ENCODE measurements at regions of chr17 and their contacts with region 1.

Region 1: DNA sequence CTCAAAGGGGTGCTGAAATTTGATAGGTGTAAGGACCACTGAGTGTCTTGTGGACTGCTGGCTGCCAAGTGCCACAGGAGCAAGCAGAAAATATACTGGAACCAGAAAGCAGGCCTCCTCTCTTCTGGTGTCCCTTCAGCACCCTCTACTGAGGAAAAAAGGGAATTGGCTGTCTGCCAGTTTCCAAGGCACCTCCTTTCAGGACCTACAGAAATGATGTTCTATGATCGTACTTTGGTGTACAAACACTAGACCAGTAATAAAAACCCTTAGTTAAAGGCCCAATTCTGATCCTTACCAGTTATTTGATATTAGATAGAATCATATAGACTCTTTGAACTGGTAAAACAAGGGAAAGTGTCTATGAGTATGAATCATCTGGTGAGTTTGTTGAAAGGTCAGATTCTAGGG is 35.8 kb upstream of the BCAS3 start:
- DNase-seq: peak; percentile 93
- ATAC-seq: peak; percentile 80
- H3K4me3 ChIP-seq: no peak overlapping the region
- H3K27ac ChIP-seq: peak overlapping the region; percentile 25
- H3K4me1 ChIP-seq: peaks cover 13% of the 10 kb centered on the region
- H3K27me3 ChIP-seq: no peaks in the 10 kb centered on the region
- CTCF ChIP-seq: peak; percentile 81

Region 2: DNA sequence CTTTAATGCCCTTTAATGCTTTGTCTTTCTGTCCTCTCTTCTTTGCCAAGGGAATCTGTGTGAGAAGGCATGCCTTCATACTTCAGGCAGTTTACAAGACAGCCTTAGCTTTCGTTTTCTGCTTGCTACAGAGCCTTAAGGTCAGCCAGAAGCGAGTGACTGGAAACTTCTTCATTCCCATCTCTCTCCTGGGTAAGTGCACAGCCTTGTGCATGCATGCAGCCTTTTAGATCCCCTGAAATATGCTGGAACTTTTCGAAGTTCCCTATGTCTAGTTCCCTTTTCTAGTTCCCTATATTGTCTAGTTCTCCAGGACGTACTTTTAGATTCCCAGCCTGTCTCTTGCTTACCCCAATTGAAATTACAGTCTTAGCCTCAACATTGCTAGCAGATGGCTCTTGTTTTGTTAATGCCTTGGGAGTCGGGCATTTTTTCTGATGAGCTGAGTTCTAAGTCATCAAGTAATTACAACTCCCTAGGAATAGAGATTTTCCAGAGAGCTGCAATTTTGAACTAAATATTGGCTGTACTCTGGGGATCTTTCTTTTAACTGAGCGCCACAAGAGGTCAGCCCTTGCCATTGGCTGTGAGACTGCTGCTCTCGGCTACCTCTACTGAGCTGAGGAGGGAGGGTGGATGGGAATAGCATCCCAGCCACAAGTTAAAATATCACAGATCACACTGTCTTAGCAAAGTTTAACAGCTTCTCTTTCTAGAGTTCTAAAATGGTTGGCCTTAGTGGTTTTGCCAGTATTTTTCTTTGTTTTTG is 64.5 kb before region 1 on chr17:
- CTCF ChIA-PET with region 1: interaction called, 24 read pairs
- POLR2A ChIA-PET with region 1: interaction called, 13 read pairs
- intact Hi-C with region 1: loop called (anchors 1 kb)
- DNase-seq: peak; percentile 52
- ATAC-seq: peak; percentile 99
- H3K4me3 ChIP-seq: peak overlapping the region; percentile 66
- H3K27ac ChIP-seq: no peak overlapping the region
- H3K4me1 ChIP-seq: 0 out of 2 replicates have a peak, but pooled peaks cover 3% of the 10 kb centered on the region
- H3K27me3 ChIP-seq: no peaks in the 10 kb centered on the region
- CTCF ChIP-seq: peak; percentile 59

Region 3: DNA sequence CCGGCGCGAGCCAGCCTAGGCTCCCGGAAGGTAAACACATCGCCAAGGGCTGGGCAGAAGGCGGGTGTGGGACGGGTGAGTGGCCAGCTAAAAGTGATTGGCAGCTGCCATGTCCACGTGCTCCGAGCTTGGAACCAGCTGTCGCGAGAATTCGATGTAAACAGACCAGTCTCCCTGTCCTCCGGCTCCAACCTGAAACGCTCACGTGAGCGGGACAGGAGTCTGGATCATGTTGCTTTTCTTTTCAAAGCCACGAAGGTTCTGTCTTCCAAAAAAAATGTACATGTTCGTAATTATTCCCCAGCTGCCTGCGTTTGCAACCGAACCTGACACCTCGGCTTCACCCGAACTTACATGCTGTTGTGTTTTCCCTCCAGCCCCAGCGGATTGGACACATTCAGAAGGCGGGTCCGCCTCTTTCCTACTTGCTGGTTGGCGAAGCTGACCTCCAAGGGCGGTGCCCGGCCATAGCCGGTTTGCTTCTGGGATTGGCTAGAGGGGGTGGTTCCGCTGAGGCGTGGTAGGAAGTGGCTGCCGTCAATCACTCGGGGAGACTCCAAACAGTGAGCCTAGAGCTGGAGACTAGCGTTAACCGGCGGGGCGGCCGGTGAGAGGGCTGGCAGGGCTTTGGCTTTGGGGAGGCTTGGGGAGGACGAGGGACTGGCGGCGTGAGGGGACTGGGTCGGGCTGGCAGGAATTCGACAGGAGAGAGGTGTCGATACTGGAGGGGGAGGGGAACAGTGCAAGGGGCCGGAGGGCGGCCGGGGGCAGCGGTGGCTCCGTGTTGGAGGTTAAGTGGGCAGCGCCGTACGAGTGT is 35.7 kb after region 1 on chr17 and contains the start of gene BCAS3:
- CTCF ChIA-PET with region 1: interaction called, 12 read pairs
- POLR2A ChIA-PET with region 1: no interaction called
- intact Hi-C with region 1: no loop called
- DNase-seq: peak; percentile 100
- ATAC-seq: peak; percentile 96
- H3K4me3 ChIP-seq: peak within 1 kb of the TSS; percentile 83
- H3K27ac ChIP-seq: no peak within 1 kb of the TSS
- H3K4me1 ChIP-seq: peaks cover 17% of the 10 kb centered on the region
- H3K27me3 ChIP-seq: no peaks in the 10 kb centered on the region
- CTCF ChIP-seq: no peak
- total RNA-seq, gene BCAS3: 25.9 and 36.9 TPM in 2 replicates

Region 4: GRCh38 chr17:60712675-60713074 is 70.9 kb after region 1 on chr17:
- CTCF ChIA-PET with region 1: no interaction called
- POLR2A ChIA-PET with region 1: no interaction called
- intact Hi-C with region 1: no loop called
- DNase-seq: no peak
- ATAC-seq: peak; percentile 37; the same call in 1 of the 2 replicates
- H3K4me3 ChIP-seq: no peak overlapping the region
- H3K27ac ChIP-seq: no peak overlapping the region
- H3K4me1 ChIP-seq: 0 out of 2 replicates have a peak, but pooled peaks cover 4% of the 10 kb centered on the region
- H3K27me3 ChIP-seq: no peaks in the 10 kb centered on the region
- CTCF ChIP-seq: no peak